ENCODE measurements at regions of chr18 and their contacts with region 1.

Region 1: DNA sequence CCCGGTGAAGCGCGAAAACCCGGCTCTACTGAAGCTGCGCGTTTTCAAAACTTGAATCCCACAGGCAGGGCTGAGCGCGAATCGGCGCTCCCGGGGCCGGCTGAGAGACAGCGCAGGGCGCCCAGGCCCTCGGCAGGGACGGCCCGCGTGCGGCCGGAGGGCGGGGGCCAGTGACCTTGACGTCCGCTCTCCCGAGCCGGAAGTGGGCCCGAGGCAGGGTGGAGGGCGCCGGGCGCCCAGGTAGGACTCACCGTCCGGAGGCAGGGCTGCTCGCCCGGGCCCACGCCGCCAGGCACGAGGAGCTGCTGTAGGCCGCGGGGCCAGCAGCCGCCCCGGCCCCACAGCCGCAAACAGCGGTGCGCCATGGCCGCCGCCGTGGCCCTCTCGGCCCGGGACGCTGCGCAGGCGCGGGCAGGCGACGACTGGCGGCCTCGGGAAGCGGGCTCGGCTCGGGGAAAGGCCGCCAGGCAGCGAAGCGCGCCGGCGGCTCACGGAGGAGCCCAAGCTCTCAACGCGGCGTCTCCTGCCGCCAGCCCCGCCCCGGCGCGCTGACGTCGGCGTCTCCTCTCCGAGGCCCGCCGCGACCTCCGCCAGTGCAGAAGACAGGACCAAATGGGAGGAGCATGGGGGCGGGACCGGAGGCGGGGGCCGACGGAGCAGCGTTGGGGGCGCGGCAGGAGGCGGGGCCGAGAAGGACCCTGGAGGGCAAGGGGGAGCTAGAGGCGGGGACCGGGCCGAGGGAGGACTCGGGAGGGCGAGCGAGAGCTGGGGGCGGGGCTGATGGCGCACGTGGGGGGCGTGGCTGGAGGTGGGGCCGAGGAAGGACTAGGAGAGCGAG is at the start of gene AFG3L2:
- DNase-seq: peak; percentile 100
- ATAC-seq: peak; percentile 88
- H3K4me3 Mint-ChIP-seq: peak within 1 kb of the TSS; percentile 90
- H3K27ac Mint-ChIP-seq: peak within 1 kb of the TSS; percentile 84
- H3K4me1 Mint-ChIP-seq: peaks cover 41% of the 10 kb centered on the region
- H3K27me3 Mint-ChIP-seq: no peaks in the 10 kb centered on the region
- CTCF ChIP-seq: no peak
- total RNA-seq, gene AFG3L2: 48.0 and 49.9 TPM in 2 replicates

Region 2: GRCh38 chr18:11908182-11909060 is 468.5 kb before region 1 on chr18 and contains the start of gene MPPE1:
- CTCF ChIA-PET with region 1: no interaction called
- POLR2A ChIA-PET with region 1: no interaction called
- intact Hi-C with region 1: loop called (anchors 2 kb)
- DNase-seq: peak; percentile 87
- ATAC-seq: peak; percentile 91
- H3K4me3 Mint-ChIP-seq: peak within 1 kb of the TSS; percentile 94
- H3K27ac Mint-ChIP-seq: peak within 1 kb of the TSS; percentile 94
- H3K4me1 Mint-ChIP-seq: peaks cover 25% of the 10 kb centered on the region
- H3K27me3 Mint-ChIP-seq: no peaks in the 10 kb centered on the region
- CTCF ChIP-seq: no peak
- total RNA-seq, gene MPPE1: 39.0 and 52.9 TPM in 2 replicates

Region 3: GRCh38 chr18:12308386-12309100 is 68.4 kb before region 1 on chr18:
- CTCF ChIA-PET with region 1: interaction called, 3 read pairs
- POLR2A ChIA-PET with region 1: interaction called, 6 read pairs
- intact Hi-C with region 1: loop called (anchors 1 kb)
- DNase-seq: peak; percentile 57
- ATAC-seq: peak; percentile 63
- H3K4me3 Mint-ChIP-seq: peak overlapping the region; percentile 85
- H3K27ac Mint-ChIP-seq: peak overlapping the region; percentile 69
- H3K4me1 Mint-ChIP-seq: peaks cover 32% of the 10 kb centered on the region
- H3K27me3 Mint-ChIP-seq: peaks cover 20% of the 10 kb centered on the region
- CTCF ChIP-seq: no peak

Region 4: GRCh38 chr18:12408247-12408869 is 31.4 kb after region 1 on chr18:
- CTCF ChIA-PET with region 1: interaction called, 3 read pairs
- POLR2A ChIA-PET with region 1: interaction called, 27 read pairs
- intact Hi-C with region 1: loop called (anchors 1 kb)
- DNase-seq: no peak
- ATAC-seq: peak; percentile 8
- H3K4me3 Mint-ChIP-seq: peak overlapping the region; percentile 76
- H3K27ac Mint-ChIP-seq: peak overlapping the region; percentile 68
- H3K4me1 Mint-ChIP-seq: peaks cover 18% of the 10 kb centered on the region
- H3K27me3 Mint-ChIP-seq: peaks cover 7% of the 10 kb centered on the region
- CTCF ChIP-seq: no peak

Region 5: GRCh38 chr18:12702221-12703095 is 325.5 kb after region 1 on chr18 and contains the starts of genes CEP76 and PSMG2:
- CTCF ChIA-PET with region 1: no interaction called
- POLR2A ChIA-PET with region 1: interaction called, 30 read pairs
- intact Hi-C with region 1: loop called (anchors 1 kb)
- DNase-seq: peak; percentile 90
- ATAC-seq: peak; percentile 88
- H3K4me3 Mint-ChIP-seq: peak within 1 kb of the TSS; percentile 99
- H3K27ac Mint-ChIP-seq: peak within 1 kb of the TSS; percentile 99
- H3K4me1 Mint-ChIP-seq: peaks cover 38% of the 10 kb centered on the region
- H3K27me3 Mint-ChIP-seq: no peaks in the 10 kb centered on the region
- CTCF ChIP-seq: no peak
- total RNA-seq, gene CEP76: 6.4 and 6.9 TPM in 2 replicates
- total RNA-seq, gene PSMG2: 67.4 and 69.1 TPM in 2 replicates

Region 6: DNA sequence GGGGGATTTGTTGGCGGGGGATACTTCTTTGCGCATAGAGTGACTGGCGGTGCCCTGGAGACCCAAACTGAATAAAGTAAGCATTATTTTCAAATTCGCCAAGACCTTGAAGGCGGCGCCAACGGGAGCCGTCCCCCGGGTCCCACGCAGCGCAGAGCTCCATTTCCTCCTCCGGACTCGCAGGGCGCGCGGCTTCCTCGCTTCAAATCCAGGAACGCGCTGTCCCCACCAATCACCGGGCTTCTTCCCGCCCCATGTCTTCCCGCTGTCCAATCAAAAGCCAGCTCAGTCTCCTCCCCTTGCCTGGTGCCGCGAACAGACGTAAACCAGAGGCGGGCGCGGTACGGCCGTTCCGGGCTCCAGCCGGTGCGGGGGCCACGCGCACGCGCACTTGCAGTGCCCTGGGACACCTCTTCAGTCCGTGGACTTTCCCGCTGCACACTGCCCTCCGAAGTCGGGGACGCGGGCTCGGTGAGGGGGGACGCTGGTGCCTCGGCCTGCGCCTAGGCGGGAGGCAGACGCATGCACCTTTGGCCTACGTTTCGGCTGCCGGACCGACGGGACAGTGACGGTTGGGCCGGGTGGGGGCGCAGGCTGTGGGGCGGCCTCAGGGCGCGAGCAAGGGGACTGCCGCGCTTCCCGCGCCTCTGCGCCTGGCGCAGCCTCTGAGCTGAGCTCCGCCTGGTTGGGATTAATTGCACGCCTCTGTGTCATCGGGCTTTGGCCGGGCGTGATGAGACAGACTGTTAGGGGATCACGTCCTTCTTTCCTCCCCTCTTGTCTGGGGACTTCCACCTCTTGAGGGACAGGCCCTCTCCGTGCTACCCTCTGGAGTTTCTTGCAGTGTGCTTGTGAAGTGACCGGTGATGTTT is 614.3 kb after region 1 on chr18 and contains the start of gene CEP192:
- CTCF ChIA-PET with region 1: no interaction called
- POLR2A ChIA-PET with region 1: interaction called, 10 read pairs
- intact Hi-C with region 1: loop called (anchors 2 kb)
- DNase-seq: peak; percentile 93
- ATAC-seq: peak; percentile 96
- H3K4me3 Mint-ChIP-seq: peak within 1 kb of the TSS; percentile 93
- H3K27ac Mint-ChIP-seq: peak within 1 kb of the TSS; percentile 94
- H3K4me1 Mint-ChIP-seq: peaks cover 32% of the 10 kb centered on the region
- H3K27me3 Mint-ChIP-seq: no peaks in the 10 kb centered on the region
- CTCF ChIP-seq: no peak
- total RNA-seq, gene CEP192: 33.6 and 34.2 TPM in 2 replicates

Region 7: DNA sequence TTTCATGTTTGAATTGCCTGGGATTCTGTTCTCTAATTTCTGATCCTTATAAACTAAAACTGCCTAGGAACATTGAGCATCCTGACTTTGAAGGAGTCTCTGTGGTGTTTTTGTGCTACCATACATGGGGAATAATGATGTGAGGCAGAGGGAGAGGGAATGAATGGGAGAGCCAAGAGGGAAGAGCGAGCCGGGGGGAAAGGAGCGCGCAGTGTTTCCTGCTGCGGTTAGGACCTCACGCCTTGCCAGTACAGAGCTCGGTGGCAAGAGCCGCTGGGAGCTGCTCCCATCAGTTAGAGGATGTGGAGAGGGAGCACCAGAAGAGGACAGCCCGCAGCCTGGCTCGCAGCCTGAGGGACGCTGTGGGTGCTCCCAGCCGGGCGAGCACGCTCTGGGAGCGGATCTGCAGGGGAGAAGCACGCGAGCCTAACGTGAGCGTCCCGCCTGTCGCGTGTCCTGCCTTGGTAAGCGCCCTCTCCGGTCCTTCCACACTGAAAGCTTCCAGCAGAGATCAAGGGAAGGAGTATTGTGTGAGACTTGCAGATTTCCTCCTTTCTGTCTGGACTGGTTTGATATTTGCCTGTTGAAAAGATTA is 1234.8 kb after region 1 on chr18:
- CTCF ChIA-PET with region 1: no interaction called
- POLR2A ChIA-PET with region 1: no interaction called
- intact Hi-C with region 1: loop called (anchors 5 kb)
- DNase-seq: peak; percentile 46
- ATAC-seq: no peak
- H3K4me3 Mint-ChIP-seq: peak overlapping the region; percentile 95
- H3K27ac Mint-ChIP-seq: peak overlapping the region; percentile 99
- H3K4me1 Mint-ChIP-seq: peaks cover 89% of the 10 kb centered on the region
- H3K27me3 Mint-ChIP-seq: no peaks in the 10 kb centered on the region
- CTCF ChIP-seq: no peak